ENCODE measurements at regions of chr3 and their contacts with region 1.

Region 1: GRCh38 chr3:58414538-58415197 is 19.0 kb downstream of the PDHB start:
- DNase-seq: peak; percentile 54 to 83 (median 63)
- H3K4me3 ChIP-seq: no peak overlapping the region
- H3K27ac ChIP-seq: peak overlapping the region in 1 of 5 donors; percentile 3
- H3K4me1 ChIP-seq: peaks cover 8 to 16% of the 10 kb centered on the region in 2 donors
- H3K27me3 ChIP-seq: no peaks in the 10 kb centered on the region
- CTCF ChIP-seq: peak; percentile 77 to 94 (median 90)
- POLR2A ChIP-seq: no peak

Region 2: DNA sequence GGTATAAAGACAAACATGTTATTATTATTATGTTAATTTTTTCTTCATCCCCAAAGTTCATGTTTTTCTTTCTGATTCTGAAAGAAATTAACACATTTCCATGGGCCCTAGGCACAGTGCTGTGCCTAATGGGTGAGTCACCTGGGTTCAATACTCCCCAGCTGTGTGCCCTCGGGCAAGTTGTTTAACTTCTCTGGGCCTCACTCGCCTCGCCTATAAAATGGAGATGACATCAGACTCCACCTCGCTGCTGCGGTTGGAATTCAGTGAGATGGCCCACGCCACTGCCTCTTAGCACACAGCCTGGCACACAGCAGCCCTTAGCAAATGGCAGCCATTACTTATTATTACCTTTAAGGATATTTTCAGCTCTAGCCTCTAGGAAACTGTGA is 226.5 kb before region 1 on chr3:
- intact Hi-C with region 1: loop called in 1 of 2 experiments (anchors 10 kb)
- DNase-seq: no peak
- H3K4me3 ChIP-seq: no peak overlapping the region
- H3K27ac ChIP-seq: no peak overlapping the region
- H3K4me1 ChIP-seq: no peaks in the 10 kb centered on the region
- H3K27me3 ChIP-seq: no peaks in the 10 kb centered on the region
- CTCF ChIP-seq: no peak
- POLR2A ChIP-seq: no peak

Region 3: GRCh38 chr3:58324391-58325390 is 90.0 kb before region 1 on chr3:
- intact Hi-C with region 1: loop called (anchors 5 kb)
- DNase-seq: no peak
- H3K4me3 ChIP-seq: no peak overlapping the region
- H3K27ac ChIP-seq: peak overlapping the region in 4 of 5 donors; percentile 13 to 77 (median 46)
- H3K4me1 ChIP-seq: peaks cover 17 to 32% of the 10 kb centered on the region in 2 donors
- H3K27me3 ChIP-seq: no peaks in the 10 kb centered on the region
- CTCF ChIP-seq: no peak
- POLR2A ChIP-seq: no peak

Measured in adrenal gland (tissue), 19 donors.